Spleen (tissue), 13 donors: ENCODE measurements at regions of chr6 and their contacts with region 1.

Region 1: GRCh38 chr6:131694831-131695426 is 6.3 kb downstream of the OR2A4 start:
- DNase-seq: no peak
- H3K4me3 ChIP-seq: no peak overlapping the region
- H3K27ac ChIP-seq: no peak overlapping the region
- H3K4me1 ChIP-seq: peaks cover 0 to 23% (median 2%) of the 10 kb centered on the region in 6 donors
- H3K27me3 ChIP-seq: no peaks in the 10 kb centered on the region
- CTCF ChIP-seq: peak in 10 of 11 experiments; percentile 38 to 76 (median 59)
- POLR2A ChIP-seq: no peak

Region 2: DNA sequence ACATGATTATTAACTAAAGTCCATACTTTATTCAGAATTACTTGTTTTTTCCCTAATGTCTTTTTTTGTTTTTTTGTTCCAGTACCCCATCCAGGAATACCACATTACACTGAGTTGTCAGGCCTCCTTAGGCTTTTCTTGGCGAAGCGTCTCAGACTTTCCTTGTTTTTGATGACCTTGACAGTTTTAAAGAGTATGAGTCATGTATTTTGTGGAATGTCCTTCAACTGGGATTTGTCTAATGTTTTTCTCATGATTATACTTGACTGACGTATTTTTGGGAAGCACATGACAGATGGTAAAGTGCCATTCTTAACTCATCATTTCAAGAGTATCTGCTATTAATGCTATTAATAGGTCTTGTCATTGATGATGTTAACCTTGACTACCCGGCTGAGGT is 136.5 kb after region 1 on chr6:
- intact Hi-C with region 1: no loop called
- DNase-seq: no peak
- H3K4me3 ChIP-seq: no peak overlapping the region
- H3K27ac ChIP-seq: no peak overlapping the region
- H3K4me1 ChIP-seq: no peaks in the 10 kb centered on the region
- H3K27me3 ChIP-seq: no peaks in the 10 kb centered on the region
- CTCF ChIP-seq: no peak
- POLR2A ChIP-seq: no peak

Region 3: GRCh38 chr6:131909408-131910218 is 214.7 kb after region 1 on chr6:
- intact Hi-C with region 1: loop called (anchors 10 kb)
- DNase-seq: no peak
- H3K4me3 ChIP-seq: no peak overlapping the region
- H3K27ac ChIP-seq: no peak overlapping the region
- H3K4me1 ChIP-seq: peaks cover 0 to 9% (median 0%) of the 10 kb centered on the region in 6 donors
- H3K27me3 ChIP-seq: peaks cover 0 to 47% (median 0%) of the 10 kb centered on the region in 7 donors
- CTCF ChIP-seq: peak; percentile 52 to 89 (median 80)
- POLR2A ChIP-seq: no peak